Common myeloid progenitor, CD34-positive (primary cell): ENCODE measurements at regions of chr4 and their contacts with region 1.

Region 1: DNA sequence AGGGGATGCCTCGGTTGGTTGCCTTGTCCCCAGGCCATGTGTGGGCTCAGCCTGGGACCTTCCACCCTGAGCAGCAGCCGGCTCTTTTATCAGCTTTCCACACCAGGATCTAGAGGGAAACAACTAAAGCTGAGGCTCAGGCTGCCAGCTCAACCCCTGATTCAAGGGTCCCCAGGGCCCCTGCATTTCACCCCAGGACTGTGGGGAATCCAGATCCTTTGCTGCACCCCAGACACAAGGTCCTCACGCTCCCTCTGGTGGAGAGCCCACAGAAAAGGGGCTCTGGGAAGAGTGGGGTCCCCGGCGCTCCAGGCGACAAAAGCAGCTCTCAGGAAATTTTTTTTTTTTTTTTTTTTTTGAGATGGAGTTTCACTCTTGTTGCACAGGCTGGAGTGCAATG is 64.3 kb downstream of the ZFYVE28 start:
- DNase-seq: peak; percentile 54 to 75 (median 67)
- H3K4me3 ChIP-seq: no peak overlapping the region
- H3K27ac ChIP-seq: no peak overlapping the region
- H3K4me1 ChIP-seq: no peaks in the 10 kb centered on the region
- H3K27me3 ChIP-seq: peaks cover 0 to 5% (median 0%) of the 10 kb centered on the region in 5 experiments

Region 2: DNA sequence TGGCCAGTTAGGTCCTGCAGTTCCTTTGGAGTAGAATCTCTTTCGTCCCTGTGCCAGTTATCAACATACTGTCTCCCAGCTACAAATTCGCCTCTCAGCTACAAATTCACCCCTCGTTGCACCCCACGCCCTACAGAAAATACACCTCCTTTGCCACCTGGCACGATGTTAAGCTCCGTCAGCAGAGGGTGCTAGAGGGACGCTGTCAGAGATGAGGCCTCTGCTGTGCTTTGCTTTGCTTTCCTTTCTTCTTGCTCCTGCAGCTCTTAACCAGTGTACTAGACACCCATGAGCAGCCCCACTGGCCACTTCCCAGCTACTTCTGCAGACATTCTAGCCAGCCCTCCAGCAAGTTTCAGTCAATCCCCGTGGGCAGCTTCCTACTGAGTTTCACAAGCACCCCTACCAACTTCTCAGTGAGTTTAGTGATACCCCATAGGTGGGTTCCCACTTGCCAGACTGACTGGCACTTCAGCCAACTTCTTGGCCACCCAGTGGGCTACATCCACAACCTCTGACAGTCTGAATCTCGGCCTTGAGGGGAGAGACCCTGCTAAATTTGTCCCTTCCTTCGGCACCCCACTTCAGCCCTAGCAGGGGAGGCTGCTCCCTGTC is 134.0 kb before region 1 on chr4:
- CTCF ChIA-PET with region 1: interaction called, 16 read pairs
- POLR2A ChIA-PET with region 1: no interaction called
- DNase-seq: peak; percentile 60 to 81 (median 72)
- H3K4me3 ChIP-seq: no peak overlapping the region
- H3K27ac ChIP-seq: no peak overlapping the region
- H3K4me1 ChIP-seq: peaks cover 0 to 3% (median under 1%) of the 10 kb centered on the region in 4 experiments
- H3K27me3 ChIP-seq: no peaks in the 10 kb centered on the region

Region 3: DNA sequence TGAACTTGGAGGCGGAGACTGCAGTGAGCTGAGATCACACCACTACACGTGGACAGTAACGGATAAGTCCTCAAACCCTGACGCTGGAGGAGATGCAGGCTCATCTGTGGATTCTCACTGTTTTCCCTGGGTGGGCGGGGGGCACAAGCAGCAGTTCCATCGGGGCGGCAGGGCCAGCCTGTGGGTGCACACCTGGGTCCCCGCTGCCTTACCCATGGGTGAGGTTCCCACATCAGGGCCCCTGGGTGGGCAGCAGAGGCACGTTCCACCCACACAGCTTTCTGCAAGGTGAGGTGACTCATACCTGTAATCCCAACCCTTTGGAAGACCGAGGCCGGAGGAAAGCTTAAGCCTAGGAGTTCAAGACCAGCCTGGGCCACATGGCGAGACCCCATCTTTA is 35.6 kb before region 1 on chr4:
- CTCF ChIA-PET with region 1: no interaction called
- POLR2A ChIA-PET with region 1: no interaction called
- DNase-seq: no peak
- H3K4me3 ChIP-seq: no peak overlapping the region
- H3K27ac ChIP-seq: no peak overlapping the region
- H3K4me1 ChIP-seq: no peaks in the 10 kb centered on the region
- H3K27me3 ChIP-seq: no peaks in the 10 kb centered on the region

Region 4: DNA sequence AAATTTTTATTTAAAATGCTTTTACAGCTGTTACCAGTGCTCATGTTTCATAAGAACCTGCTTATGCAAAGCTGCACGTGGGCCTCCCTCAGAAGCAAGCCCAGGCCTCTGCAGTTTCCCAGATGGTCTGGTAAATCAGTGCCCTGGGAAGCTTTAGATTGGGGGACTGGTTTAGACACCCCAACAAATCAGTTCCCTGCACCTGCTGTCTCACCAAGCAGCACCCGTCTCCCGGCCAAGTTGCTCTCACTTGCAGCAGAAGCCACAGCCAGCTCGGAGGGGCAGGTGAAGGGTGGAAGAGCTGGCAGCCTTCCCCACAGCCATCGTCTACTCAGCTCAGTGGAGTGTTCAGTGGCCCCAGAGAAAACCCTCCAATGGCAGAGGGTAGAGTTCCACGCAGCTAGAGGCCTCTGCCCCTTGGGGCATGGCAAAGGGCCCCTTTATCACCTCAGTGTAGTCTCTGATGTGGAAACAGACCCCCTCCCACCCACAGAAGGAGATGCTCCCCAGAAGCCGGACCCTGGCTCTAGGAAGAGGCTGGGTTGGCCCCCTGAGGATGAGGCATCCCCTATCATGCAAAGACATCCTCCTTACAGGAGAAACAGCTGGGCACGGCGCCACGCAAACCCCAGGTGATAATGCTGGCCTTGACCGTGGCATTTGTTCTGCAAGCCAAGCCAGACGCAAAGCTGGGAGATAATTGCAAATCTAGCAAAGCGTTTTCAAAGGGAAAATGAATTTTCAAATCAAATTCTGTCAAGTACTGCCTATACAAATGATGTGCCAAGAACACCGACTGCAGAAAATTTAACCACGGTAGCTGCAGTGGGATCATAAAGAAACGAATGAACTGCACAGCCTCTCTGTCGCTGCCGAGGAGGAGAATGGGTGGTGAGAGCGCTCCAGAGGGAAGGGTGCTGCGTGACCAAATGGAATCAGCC is 12.4 kb after region 1 on chr4:
- CTCF ChIA-PET with region 1: interaction called, 10 read pairs
- POLR2A ChIA-PET with region 1: no interaction called
- DNase-seq: no peak
- H3K4me3 ChIP-seq: no peak overlapping the region
- H3K27ac ChIP-seq: no peak overlapping the region
- H3K4me1 ChIP-seq: peaks cover 0 to 11% (median 7%) of the 10 kb centered on the region in 4 experiments
- H3K27me3 ChIP-seq: peaks cover 0 to 11% (median 0%) of the 10 kb centered on the region in 5 experiments

Region 5: DNA sequence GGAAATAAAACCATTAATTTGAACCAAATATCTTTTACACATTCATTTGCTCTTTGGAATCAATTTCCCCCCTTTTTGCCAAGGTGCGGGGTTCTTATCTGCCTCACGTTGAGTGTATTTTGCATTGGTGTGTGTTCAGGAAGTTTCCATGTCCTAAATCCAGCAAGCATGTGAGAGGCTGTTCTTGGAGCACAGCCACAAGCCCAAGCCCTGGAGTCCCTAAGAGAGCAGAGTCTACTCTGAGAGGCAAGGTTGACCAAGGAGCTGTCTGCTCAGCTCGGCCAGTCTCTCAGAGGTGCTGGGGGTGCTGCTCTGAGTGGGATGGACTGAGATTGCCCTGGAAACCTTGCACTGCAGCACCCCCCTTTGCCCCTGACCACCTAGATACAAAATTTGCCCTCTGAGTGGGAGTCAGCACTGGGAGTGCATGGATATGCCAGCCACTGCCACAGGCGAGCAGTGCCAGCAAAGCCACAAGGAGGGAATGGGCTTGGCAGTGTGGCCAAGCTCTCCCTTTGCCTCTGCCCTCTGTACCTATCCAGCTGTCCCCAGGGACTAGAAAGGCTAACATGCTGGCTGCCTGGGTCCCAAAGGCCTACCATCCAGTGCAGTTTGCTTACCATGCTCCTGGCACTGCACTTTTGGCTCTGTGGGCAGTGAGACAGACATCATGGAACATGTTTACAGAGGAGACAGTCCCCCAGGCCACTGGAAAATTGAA is 161.9 kb after region 1 on chr4:
- CTCF ChIA-PET with region 1: no interaction called
- POLR2A ChIA-PET with region 1: no interaction called
- DNase-seq: no peak
- H3K4me3 ChIP-seq: no peak overlapping the region
- H3K27ac ChIP-seq: no peak overlapping the region
- H3K4me1 ChIP-seq: no peaks in the 10 kb centered on the region
- H3K27me3 ChIP-seq: no peaks in the 10 kb centered on the region